Esophagus muscularis mucosa (tissue), 4 donors: ENCODE measurements at regions of chr10 and their contacts with region 1.

Region 1: GRCh38 chr10:119821182-119821581 is 51.5 kb downstream of the MCMBP start:
- DNase-seq: no peak
- H3K4me3 ChIP-seq: no peak overlapping the region
- H3K27ac ChIP-seq: no peak overlapping the region
- H3K4me1 ChIP-seq: peaks cover 5 to 32% (median 22%) of the 10 kb centered on the region in 4 donors
- H3K27me3 ChIP-seq: no peaks in the 10 kb centered on the region
- CTCF ChIP-seq: no peak
- EP300 ChIP-seq: no peak
- POLR2A ChIP-seq: no peak

Region 2: GRCh38 chr10:119667562-119668328 is 153.4 kb before region 1 on chr10:
- intact Hi-C with region 1: no loop called
- DNase-seq: no peak
- H3K4me3 ChIP-seq: peak overlapping the region in 2 of 4 donors; percentile 2 to 8
- H3K27ac ChIP-seq: peak overlapping the region; percentile 63 to 83 (median 74)
- H3K4me1 ChIP-seq: peaks cover 65 to 80% (median 72%) of the 10 kb centered on the region in 4 donors
- H3K27me3 ChIP-seq: no peaks in the 10 kb centered on the region
- CTCF ChIP-seq: no peak
- EP300 ChIP-seq: no peak
- POLR2A ChIP-seq: no peak

Region 3: DNA sequence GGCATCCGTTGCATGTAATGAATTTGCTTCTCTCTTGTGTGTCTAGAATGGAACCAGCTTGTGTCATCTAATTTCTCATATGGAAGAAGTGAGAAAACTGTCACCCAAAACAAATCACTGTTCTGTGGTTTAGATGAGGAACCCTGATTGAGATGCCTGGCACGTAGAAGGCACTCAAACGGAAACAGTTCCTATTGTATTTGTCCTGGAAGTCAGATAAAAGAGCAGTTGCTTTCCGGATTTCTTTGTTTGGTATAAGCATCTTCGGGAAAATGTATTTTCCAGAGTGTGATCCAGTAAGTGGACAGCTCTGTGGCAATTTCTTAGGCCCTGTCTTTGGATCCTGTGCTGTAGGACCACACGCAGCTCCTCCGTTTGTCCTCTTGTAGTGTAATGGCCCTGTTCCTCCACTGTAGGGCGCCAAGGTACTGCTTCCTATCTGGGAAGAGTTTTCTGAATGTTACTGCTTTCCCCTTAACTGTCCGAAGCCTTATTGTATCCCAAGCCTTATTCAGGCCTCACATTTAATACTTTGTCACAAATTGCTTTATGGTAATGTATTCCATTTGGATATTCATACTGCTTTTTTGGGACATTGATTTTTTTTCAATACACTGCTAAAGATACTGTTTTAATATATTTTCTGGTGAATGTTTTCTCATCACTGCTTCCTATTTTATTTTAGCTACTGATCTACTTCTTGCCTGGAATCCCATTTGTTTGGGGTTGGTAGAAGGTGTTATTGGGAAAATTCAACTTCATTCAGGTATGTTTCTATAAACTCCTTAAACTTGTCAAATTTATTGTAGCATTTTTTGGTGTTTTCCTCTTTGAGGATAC is 70.6 kb before region 1 on chr10:
- intact Hi-C with region 1: loop called (anchors 5 kb)
- DNase-seq: no peak
- H3K4me3 ChIP-seq: no peak overlapping the region
- H3K27ac ChIP-seq: peak overlapping the region in 2 of 4 donors; percentile 5 to 29
- H3K4me1 ChIP-seq: peaks cover 5 to 39% (median 29%) of the 10 kb centered on the region in 4 donors
- H3K27me3 ChIP-seq: no peaks in the 10 kb centered on the region
- CTCF ChIP-seq: peak; percentile 90 to 93 (median 91)
- EP300 ChIP-seq: no peak
- POLR2A ChIP-seq: no peak

Region 4: DNA sequence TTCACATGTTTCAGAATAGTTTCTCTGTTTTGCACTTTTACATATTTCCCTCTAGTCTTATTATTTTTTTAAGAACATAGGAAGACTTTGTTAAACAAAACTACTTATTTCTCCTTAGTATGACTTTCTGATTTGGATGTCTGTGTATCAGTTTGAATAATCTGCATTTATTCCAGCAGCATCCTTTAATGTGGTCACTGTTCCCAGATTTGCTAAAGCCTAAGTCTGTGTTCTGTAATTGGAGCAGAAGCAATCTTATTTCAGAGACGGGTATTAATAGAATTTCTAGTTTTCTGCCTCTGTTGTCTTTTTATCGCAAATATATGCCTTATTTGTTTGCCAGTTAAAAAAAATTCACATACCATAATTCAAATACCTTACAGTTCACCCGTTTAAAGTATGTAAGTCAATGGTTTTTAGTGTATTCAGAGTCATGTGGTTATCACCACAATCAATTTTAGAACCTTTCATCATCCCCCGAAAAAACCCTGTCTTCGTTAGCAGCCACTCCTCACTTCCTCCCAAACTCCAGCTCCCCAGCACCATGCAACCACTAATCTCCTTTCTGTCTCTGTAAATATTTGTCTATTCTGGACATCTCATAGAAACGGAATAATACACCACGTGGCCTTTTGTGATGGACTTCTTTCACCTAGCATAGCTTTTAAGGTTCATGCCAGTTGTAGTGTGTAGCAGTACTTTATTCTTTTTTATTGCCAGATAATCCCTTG is 36.7 kb before region 1 on chr10:
- intact Hi-C with region 1: no loop called
- DNase-seq: no peak
- H3K4me3 ChIP-seq: no peak overlapping the region
- H3K27ac ChIP-seq: no peak overlapping the region
- H3K4me1 ChIP-seq: peaks cover 8 to 37% (median 31%) of the 10 kb centered on the region in 4 donors
- H3K27me3 ChIP-seq: no peaks in the 10 kb centered on the region
- CTCF ChIP-seq: no peak
- EP300 ChIP-seq: no peak
- POLR2A ChIP-seq: no peak

Region 5: GRCh38 chr10:120209124-120209762 is 388.1 kb after region 1 on chr10:
- intact Hi-C with region 1: no loop called
- DNase-seq: no peak
- H3K4me3 ChIP-seq: no peak overlapping the region
- H3K27ac ChIP-seq: no peak overlapping the region
- H3K4me1 ChIP-seq: no peaks in the 10 kb centered on the region
- H3K27me3 ChIP-seq: no peaks in the 10 kb centered on the region
- CTCF ChIP-seq: no peak
- EP300 ChIP-seq: no peak
- POLR2A ChIP-seq: no peak